Caco-2 (cell line): ENCODE measurements at regions of chr1 and their contacts with region 1.

Region 1: DNA sequence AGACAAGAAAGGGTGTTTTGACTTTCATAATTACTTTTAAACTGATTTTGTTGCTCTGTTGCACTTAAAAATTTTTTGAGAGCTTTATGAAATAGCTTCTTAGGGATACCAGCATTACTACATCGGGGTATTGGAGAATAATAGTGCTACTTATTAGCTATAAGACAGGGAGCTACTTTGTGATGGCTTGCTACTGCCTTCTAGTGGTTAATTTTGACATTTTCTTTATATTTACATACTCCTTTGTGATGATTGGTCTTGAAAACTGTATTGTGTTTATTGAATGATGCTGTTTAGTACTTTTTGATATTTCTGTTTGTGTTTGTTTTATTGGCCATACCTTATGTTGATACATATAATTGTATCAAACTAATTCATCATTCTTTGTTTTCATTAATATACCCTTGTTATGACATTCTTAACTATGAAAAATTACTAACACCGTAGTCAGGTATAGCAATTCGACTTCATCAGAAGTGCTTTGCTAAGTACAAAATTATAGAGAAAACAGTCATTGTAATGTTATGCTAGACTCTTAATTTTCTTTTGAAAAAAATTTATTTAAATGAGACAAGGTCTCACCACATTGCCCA is 85.5 kb downstream of the CLIC4 start:
- DNase-seq: peak in 1 of 2 experiments; percentile 32
- H3K4me3 ChIP-seq: no peak overlapping the region
- H3K4me3 Mint-ChIP-seq: no peak overlapping the region
- H3K27ac Mint-ChIP-seq: no peak overlapping the region
- H3K4me1 ChIP-seq: no peaks in the 10 kb centered on the region
- H3K4me1 Mint-ChIP-seq: no peaks in the 10 kb centered on the region
- H3K27me3 ChIP-seq: no peaks in the 10 kb centered on the region
- H3K27me3 Mint-ChIP-seq: no peaks in the 10 kb centered on the region
- CTCF ChIP-seq: peak; percentile 51 to 60

Region 2: GRCh38 chr1:24459551-24460266 is 371.1 kb before region 1 on chr1:
- CTCF ChIA-PET with region 1: interaction called, 12 read pairs
- POLR2A ChIA-PET with region 1: no interaction called
- intact Hi-C with region 1: no loop called
- DNase-seq: no peak
- H3K4me3 ChIP-seq: no peak overlapping the region
- H3K4me3 Mint-ChIP-seq: no peak overlapping the region
- H3K27ac Mint-ChIP-seq: no peak overlapping the region
- H3K4me1 ChIP-seq: no peaks in the 10 kb centered on the region
- H3K4me1 Mint-ChIP-seq: peaks cover 9% of the 10 kb centered on the region
- H3K27me3 ChIP-seq: no peaks in the 10 kb centered on the region
- H3K27me3 Mint-ChIP-seq: no peaks in the 10 kb centered on the region
- CTCF ChIP-seq: no peak

Region 3: DNA sequence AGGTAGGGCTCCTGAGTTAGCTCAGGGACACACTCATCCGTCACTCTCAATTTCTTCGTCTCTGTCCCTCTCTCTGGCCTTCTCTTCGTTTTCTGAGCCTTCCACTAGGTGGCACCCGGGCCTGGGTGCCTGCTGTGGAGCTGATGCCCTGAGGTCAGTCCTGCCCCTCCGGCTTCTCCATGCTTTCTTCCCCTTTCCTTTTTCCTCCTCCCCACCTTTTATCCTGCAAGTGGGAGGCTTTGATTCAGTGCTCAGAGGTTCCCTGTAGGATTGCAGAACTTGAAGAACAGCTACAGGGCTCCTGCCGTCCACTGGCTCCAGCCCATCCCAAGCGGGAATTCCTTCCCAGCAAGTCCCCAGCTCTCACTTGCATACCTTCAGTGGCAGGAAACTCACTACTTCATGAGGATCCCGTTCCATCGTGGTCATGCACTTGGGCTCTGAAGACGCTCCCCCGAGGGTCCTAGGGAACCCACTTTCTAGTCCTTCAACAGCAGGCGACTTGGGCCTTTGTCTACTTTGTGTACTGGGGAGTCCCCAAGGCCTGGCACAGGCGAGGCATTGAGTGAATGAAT is 142.1 kb before region 1 on chr1:
- CTCF ChIA-PET with region 1: interaction called, 95 read pairs
- POLR2A ChIA-PET with region 1: no interaction called
- intact Hi-C with region 1: loop called (anchors 2 kb)
- DNase-seq: peak; percentile 72 to 75
- H3K4me3 ChIP-seq: no peak overlapping the region
- H3K4me3 Mint-ChIP-seq: no peak overlapping the region
- H3K27ac Mint-ChIP-seq: no peak overlapping the region
- H3K4me1 ChIP-seq: peaks cover 8% of the 10 kb centered on the region
- H3K4me1 Mint-ChIP-seq: peaks cover 3% of the 10 kb centered on the region
- H3K27me3 ChIP-seq: no peaks in the 10 kb centered on the region
- H3K27me3 Mint-ChIP-seq: no peaks in the 10 kb centered on the region
- CTCF ChIP-seq: peak; percentile 64 to 86

Region 4: DNA sequence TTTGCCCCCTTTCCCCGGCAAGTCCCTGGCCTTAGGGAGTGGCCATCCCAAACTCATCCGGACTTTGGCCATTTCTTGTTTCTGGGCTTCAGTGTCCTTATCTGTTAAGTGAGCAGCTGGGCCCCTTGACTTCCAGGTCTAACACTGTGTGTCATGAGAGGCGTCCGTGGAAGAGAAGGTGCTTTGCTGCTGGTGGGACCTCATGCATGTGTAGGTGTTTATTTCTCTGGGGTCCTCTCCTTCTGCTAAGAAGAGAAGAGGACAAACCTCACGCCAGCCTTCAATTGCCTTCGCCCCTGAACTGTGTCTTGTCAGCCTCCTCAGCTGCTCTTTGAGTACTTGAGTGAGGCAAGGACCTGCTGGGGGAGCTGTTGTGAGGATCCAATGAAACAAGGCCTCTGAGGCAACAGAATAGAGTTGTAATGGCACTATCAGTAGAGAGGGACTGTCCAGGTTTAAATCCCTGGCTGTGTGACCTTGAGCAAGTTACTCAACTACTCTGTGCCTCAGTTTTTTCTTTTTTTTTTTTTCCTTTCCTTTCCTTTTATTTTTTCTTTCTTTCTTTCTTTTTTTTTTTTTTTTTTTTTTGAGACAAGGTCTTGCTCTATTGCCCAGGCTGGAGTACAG is 26.8 kb after region 1 on chr1:
- CTCF ChIA-PET with region 1: no interaction called
- POLR2A ChIA-PET with region 1: no interaction called
- intact Hi-C with region 1: no loop called
- DNase-seq: no peak
- H3K4me3 ChIP-seq: no peak overlapping the region
- H3K4me3 Mint-ChIP-seq: no peak overlapping the region
- H3K27ac Mint-ChIP-seq: no peak overlapping the region
- H3K4me1 ChIP-seq: peaks cover 15% of the 10 kb centered on the region; the same call in 1 of the 2 replicates
- H3K4me1 Mint-ChIP-seq: no peaks in the 10 kb centered on the region
- H3K27me3 ChIP-seq: no peaks in the 10 kb centered on the region
- H3K27me3 Mint-ChIP-seq: no peaks in the 10 kb centered on the region
- CTCF ChIP-seq: no peak